CD4-positive, alpha-beta memory T cell (primary cell): ENCODE measurements at regions of chr6 and their contacts with region 1.

Region 1: GRCh38 chr6:106223300-106223930 is 102.1 kb downstream of the ATG5 start:
- DNase-seq: peak; percentile 70 to 79 (median 73)
- H3K4me3 ChIP-seq: no peak overlapping the region
- H3K4me3 Mint-ChIP-seq: no peak overlapping the region
- H3K27ac ChIP-seq: no peak overlapping the region
- H3K27ac Mint-ChIP-seq: peak overlapping the region in 3 of 7 donors; percentile 40 to 74 (median 63)
- H3K4me1 ChIP-seq: peaks cover 8% of the 10 kb centered on the region
- H3K4me1 Mint-ChIP-seq: peaks cover 6 to 28% (median 13%) of the 10 kb centered on the region in 4 donors
- H3K27me3 ChIP-seq: no peaks in the 10 kb centered on the region
- H3K27me3 Mint-ChIP-seq: no peaks in the 10 kb centered on the region

Region 2: DNA sequence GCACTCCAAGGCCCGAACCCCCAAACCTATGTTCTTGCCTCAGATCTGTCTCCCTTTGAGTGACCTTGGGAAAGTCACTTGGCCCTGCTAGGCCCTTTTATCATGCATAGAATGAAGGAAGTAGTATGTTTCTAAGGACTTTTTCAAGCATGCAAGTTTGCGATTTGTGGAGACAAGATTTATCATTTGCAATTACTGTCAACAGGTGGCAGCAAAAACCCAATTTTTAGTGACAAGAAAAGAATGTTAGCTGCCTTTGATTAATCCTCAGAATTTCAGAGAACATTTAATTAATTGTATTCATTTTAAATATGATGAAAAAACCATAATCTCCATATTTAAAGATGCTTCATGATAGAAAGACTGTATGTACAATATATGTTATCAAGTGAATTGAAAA is 792.2 kb before region 1 on chr6:
- CTCF ChIA-PET with region 1: interaction called, 36 read pairs
- POLR2A ChIA-PET with region 1: interaction called, 3 read pairs
- intact Hi-C with region 1: loop called (anchors 1 kb)
- DNase-seq: peak in 4 of 5 donors; percentile 35 to 49 (median 42)
- H3K4me3 ChIP-seq: no peak overlapping the region
- H3K4me3 Mint-ChIP-seq: no peak overlapping the region
- H3K27ac ChIP-seq: no peak overlapping the region
- H3K27ac Mint-ChIP-seq: no peak overlapping the region
- H3K4me1 ChIP-seq: no peaks in the 10 kb centered on the region
- H3K4me1 Mint-ChIP-seq: no peaks in the 10 kb centered on the region
- H3K27me3 ChIP-seq: no peaks in the 10 kb centered on the region
- H3K27me3 Mint-ChIP-seq: peaks cover 0 to 2% of the 10 kb centered on the region in 2 donors

Region 3: GRCh38 chr6:105793130-105793529 is 430.3 kb before region 1 on chr6:
- CTCF ChIA-PET with region 1: interaction called, 23 read pairs
- POLR2A ChIA-PET with region 1: no interaction called
- intact Hi-C with region 1: loop called (anchors 1 kb)
- DNase-seq: peak in 2 of 5 donors; percentile 22 to 27
- H3K4me3 ChIP-seq: no peak overlapping the region
- H3K4me3 Mint-ChIP-seq: no peak overlapping the region
- H3K27ac ChIP-seq: no peak overlapping the region
- H3K27ac Mint-ChIP-seq: peak overlapping the region in 3 of 7 donors; percentile 6 to 46 (median 8)
- H3K4me1 ChIP-seq: peaks cover 28% of the 10 kb centered on the region
- H3K4me1 Mint-ChIP-seq: peaks cover 8 to 24% (median 15%) of the 10 kb centered on the region in 4 donors
- H3K27me3 ChIP-seq: no peaks in the 10 kb centered on the region
- H3K27me3 Mint-ChIP-seq: no peaks in the 10 kb centered on the region

Region 4: DNA sequence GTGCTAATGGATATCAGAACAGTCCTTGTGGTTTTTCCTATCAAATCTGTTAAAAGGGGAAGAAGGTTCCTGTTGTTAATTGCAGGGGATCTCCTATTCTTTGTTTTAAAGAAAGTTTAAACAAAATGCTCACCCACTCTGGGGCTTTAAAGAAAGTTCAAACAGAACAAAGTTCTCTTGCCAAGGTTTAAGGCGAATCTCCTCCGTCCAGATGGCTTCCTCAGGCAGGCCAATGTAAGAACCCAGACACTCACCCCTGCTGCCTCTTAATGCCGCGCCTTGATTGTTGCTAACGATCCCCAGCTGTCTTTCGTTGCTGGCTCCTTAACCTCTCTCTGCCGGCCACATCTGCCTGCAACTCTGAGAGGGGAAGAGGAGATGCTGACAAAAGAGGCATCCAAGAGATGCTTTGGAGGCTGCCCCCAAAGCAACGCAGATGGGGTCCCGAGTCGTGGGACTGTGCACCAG is 372.3 kb before region 1 on chr6:
- CTCF ChIA-PET with region 1: no interaction called
- POLR2A ChIA-PET with region 1: no interaction called
- intact Hi-C with region 1: no loop called
- DNase-seq: no peak
- H3K4me3 ChIP-seq: no peak overlapping the region
- H3K4me3 Mint-ChIP-seq: no peak overlapping the region
- H3K27ac ChIP-seq: no peak overlapping the region
- H3K27ac Mint-ChIP-seq: no peak overlapping the region
- H3K4me1 ChIP-seq: no peaks in the 10 kb centered on the region
- H3K4me1 Mint-ChIP-seq: no peaks in the 10 kb centered on the region
- H3K27me3 ChIP-seq: no peaks in the 10 kb centered on the region
- H3K27me3 Mint-ChIP-seq: peaks cover 0 to under 1% of the 10 kb centered on the region in 2 donors

Region 5: GRCh38 chr6:106085984-106086813 is 137.2 kb before region 1 on chr6 and contains the start of gene PRDM1:
- CTCF ChIA-PET with region 1: interaction called, 206 read pairs
- POLR2A ChIA-PET with region 1: interaction called, 22 read pairs
- intact Hi-C with region 1: loop called (anchors 1 kb)
- DNase-seq: peak; percentile 78 to 93 (median 80)
- H3K4me3 ChIP-seq: peak within 1 kb of the TSS; percentile 58 to 61
- H3K4me3 Mint-ChIP-seq: peak within 1 kb of the TSS; percentile 89 to 97 (median 94)
- H3K27ac ChIP-seq: peak within 1 kb of the TSS; percentile 57
- H3K27ac Mint-ChIP-seq: peak within 1 kb of the TSS; percentile 81 to 94 (median 91)
- H3K4me1 ChIP-seq: peaks cover 84% of the 10 kb centered on the region
- H3K4me1 Mint-ChIP-seq: peaks cover 66 to 95% (median 82%) of the 10 kb centered on the region in 4 donors
- H3K27me3 ChIP-seq: no peaks in the 10 kb centered on the region
- H3K27me3 Mint-ChIP-seq: peaks cover 0 to 2% of the 10 kb centered on the region in 2 donors
- total RNA-seq, gene PRDM1: 33.4 to 34.0 TPM

Region 6: DNA sequence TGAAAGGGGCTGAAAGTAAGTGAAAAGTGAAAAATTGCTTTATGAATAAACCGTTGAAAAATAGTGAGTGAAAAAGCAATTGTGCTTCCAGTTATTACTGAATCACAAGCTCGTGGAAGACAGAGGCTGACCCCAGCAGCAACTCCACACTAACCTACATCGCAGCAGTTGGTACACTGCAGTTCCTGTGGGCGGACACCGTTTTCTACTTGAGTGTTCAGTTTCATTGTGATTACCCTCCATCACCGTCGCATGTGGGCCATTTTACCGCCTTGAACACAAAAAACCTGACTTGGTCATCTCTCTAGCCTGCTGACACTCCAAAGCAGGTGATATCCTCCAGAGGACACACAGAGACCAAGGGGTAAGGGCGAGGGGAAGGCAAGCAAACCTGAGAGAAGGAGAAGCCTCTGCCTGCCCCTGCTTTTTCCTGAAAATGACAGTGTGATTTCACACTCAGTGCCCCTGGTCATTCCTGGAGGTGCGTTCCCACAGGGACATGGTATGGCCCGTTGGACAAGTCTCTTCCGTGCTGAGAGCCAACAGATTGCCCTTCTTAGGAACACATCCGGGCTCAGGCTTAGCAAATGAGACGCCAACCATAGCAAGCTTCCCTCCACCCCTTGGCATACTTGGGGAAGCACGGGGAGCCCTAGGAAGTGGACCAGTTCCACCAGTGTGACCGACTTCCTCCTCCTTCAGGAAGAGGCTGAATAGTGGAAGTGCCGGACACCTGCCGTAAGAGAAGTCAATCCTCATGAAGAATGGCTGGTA is 108.7 kb before region 1 on chr6:
- CTCF ChIA-PET with region 1: interaction called, 14 read pairs
- POLR2A ChIA-PET with region 1: interaction called, 3 read pairs
- intact Hi-C with region 1: no loop called
- DNase-seq: peak in 3 of 5 donors; percentile 33 to 64 (median 39)
- H3K4me3 ChIP-seq: peak overlapping the region in 1 of 2 donors; percentile 30
- H3K4me3 Mint-ChIP-seq: peak overlapping the region; percentile 64 to 86 (median 75)
- H3K27ac ChIP-seq: peak overlapping the region; percentile 41
- H3K27ac Mint-ChIP-seq: peak overlapping the region; percentile 54 to 90 (median 85)
- H3K4me1 ChIP-seq: peaks cover 88% of the 10 kb centered on the region
- H3K4me1 Mint-ChIP-seq: peaks cover 65 to 98% (median 81%) of the 10 kb centered on the region in 4 donors
- H3K27me3 ChIP-seq: no peaks in the 10 kb centered on the region
- H3K27me3 Mint-ChIP-seq: peaks cover 0 to 2% of the 10 kb centered on the region in 2 donors

Region 7: DNA sequence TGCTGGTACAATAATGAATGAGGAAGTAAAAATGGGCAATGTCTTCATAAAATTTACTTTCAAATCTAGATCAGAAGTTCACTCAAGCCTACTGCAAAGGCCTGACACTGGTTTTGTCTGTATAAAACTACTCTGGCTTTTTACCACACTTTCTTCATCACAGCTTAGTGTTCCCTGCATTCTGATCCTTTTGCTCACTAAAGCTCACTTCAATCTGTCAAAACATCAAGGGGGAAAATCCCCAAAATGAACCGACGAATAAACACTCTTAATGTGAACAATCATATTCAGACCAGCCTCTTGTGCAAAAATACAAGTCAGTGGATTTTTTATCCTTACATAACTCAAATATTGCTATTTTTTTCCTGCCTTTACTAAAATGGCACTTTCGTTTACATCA is 38.8 kb before region 1 on chr6:
- CTCF ChIA-PET with region 1: interaction called, 11 read pairs
- POLR2A ChIA-PET with region 1: no interaction called
- intact Hi-C with region 1: no loop called
- DNase-seq: peak in 1 of 5 donors; percentile 13
- H3K4me3 ChIP-seq: no peak overlapping the region
- H3K4me3 Mint-ChIP-seq: peak overlapping the region in 1 of 8 donors; percentile 58
- H3K27ac ChIP-seq: no peak overlapping the region
- H3K27ac Mint-ChIP-seq: peak overlapping the region in 2 of 7 donors; percentile 59 to 66
- H3K4me1 ChIP-seq: peaks cover 91% of the 10 kb centered on the region
- H3K4me1 Mint-ChIP-seq: peaks cover 48 to 75% (median 63%) of the 10 kb centered on the region in 4 donors
- H3K27me3 ChIP-seq: no peaks in the 10 kb centered on the region
- H3K27me3 Mint-ChIP-seq: no peaks in the 10 kb centered on the region

Region 8: DNA sequence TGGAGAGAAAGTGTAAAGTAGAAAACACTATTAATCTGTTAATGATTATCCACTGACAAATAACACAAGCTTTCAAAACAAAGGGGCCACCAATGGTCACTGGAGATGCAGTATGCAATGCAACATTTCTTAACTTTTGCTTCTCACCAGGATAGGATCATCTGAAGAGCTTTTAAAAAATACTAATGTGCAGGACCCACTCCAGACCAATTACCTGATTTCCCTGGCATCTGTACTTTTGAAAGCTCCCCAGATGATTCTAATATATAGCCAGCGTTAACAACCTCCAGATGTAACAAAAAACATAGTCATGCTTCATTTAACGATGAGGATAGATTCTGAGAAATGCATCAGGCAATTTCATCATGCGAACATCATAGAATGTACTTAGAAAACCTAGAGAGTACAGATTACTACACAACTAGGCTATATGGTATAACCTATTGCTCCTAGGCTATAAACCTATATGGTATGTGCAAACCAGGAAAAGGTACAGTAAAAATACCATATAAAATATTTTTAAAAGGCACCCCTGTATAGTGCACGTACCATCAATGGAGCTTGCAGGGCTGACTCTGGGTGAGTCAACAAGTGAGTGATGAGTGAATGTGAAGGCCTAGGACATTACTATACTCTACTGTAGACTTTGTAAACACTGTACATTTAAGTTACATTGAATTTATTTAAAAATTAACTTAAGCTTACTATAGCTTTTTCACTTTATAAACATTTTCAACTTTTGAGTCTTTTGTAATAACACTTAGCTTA is 33.0 kb after region 1 on chr6:
- CTCF ChIA-PET with region 1: interaction called, 11 read pairs
- POLR2A ChIA-PET with region 1: no interaction called
- intact Hi-C with region 1: no loop called
- DNase-seq: no peak
- H3K4me3 ChIP-seq: no peak overlapping the region
- H3K4me3 Mint-ChIP-seq: no peak overlapping the region
- H3K27ac ChIP-seq: no peak overlapping the region
- H3K27ac Mint-ChIP-seq: peak overlapping the region in 2 of 7 donors; percentile 12 to 82
- H3K4me1 ChIP-seq: no peaks in the 10 kb centered on the region
- H3K4me1 Mint-ChIP-seq: peaks cover 9 to 26% (median 17%) of the 10 kb centered on the region in 4 donors
- H3K27me3 ChIP-seq: no peaks in the 10 kb centered on the region
- H3K27me3 Mint-ChIP-seq: no peaks in the 10 kb centered on the region

Region 9: DNA sequence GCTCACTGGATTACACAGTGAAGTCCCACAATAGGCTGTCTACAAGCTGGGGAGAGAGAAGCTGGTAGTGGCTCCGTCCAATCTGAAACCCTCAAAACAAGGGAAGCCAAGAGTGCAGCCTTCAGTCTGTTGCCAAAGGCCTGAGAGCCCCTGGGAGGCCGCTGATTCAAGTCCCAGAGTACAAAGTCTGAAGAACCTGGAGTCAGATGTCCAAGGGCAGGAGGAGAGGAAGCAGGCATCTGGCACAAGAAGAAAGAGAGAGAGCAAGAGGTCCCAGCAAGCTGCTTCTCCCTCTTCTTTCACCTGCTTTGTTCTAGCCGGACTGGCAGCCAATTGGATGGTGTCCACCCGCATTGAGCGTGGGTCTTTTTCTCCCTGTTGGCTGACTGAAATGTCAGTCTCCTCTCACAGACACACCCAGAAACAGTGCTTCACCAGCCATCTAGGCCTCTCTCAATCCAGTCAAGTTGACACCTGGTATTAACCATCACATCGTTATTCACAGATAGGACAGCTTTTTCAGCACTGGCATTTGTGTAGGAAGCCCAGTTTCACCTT is 188.3 kb after region 1 on chr6:
- CTCF ChIA-PET with region 1: no interaction called
- POLR2A ChIA-PET with region 1: no interaction called
- intact Hi-C with region 1: no loop called
- DNase-seq: no peak
- H3K4me3 ChIP-seq: no peak overlapping the region
- H3K4me3 Mint-ChIP-seq: no peak overlapping the region
- H3K27ac ChIP-seq: no peak overlapping the region
- H3K27ac Mint-ChIP-seq: no peak overlapping the region
- H3K4me1 ChIP-seq: no peaks in the 10 kb centered on the region
- H3K4me1 Mint-ChIP-seq: peaks cover 0 to 1% (median 0%) of the 10 kb centered on the region in 4 donors
- H3K27me3 ChIP-seq: no peaks in the 10 kb centered on the region
- H3K27me3 Mint-ChIP-seq: peaks cover 16 to 17% of the 10 kb centered on the region in 2 donors